CD4-positive, alpha-beta memory T cell (primary cell): ENCODE measurements at regions of chr12 and their contacts with region 1.

Region 1: GRCh38 chr12:47361389-47362021 is 281.7 kb upstream of the AMIGO2 start:
- DNase-seq: peak; percentile 23 to 64 (median 29)
- H3K4me3 ChIP-seq: peak overlapping the region; percentile 37 to 41
- H3K4me3 Mint-ChIP-seq: peak overlapping the region; percentile 73 to 93 (median 86)
- H3K27ac ChIP-seq: peak overlapping the region; percentile 90
- H3K27ac Mint-ChIP-seq: peak overlapping the region; percentile 94 to 99 (median 96)
- H3K4me1 ChIP-seq: peaks cover 81% of the 10 kb centered on the region
- H3K4me1 Mint-ChIP-seq: peaks cover 48 to 63% (median 55%) of the 10 kb centered on the region in 4 donors
- H3K27me3 ChIP-seq: no peaks in the 10 kb centered on the region
- H3K27me3 Mint-ChIP-seq: no peaks in the 10 kb centered on the region

Region 2: GRCh38 chr12:46224386-46224785 is 1137.1 kb before region 1 on chr12:
- CTCF ChIA-PET with region 1: no interaction called
- POLR2A ChIA-PET with region 1: no interaction called
- intact Hi-C with region 1: loop called (anchors 1 kb)
- DNase-seq: no peak
- H3K4me3 ChIP-seq: no peak overlapping the region
- H3K4me3 Mint-ChIP-seq: peak overlapping the region in 5 of 8 donors; percentile 13 to 53 (median 23)
- H3K27ac ChIP-seq: no peak overlapping the region
- H3K27ac Mint-ChIP-seq: peak overlapping the region; percentile 4 to 96 (median 86)
- H3K4me1 ChIP-seq: peaks cover 81% of the 10 kb centered on the region
- H3K4me1 Mint-ChIP-seq: peaks cover 60 to 90% (median 70%) of the 10 kb centered on the region in 4 donors
- H3K27me3 ChIP-seq: no peaks in the 10 kb centered on the region
- H3K27me3 Mint-ChIP-seq: no peaks in the 10 kb centered on the region

Region 3: DNA sequence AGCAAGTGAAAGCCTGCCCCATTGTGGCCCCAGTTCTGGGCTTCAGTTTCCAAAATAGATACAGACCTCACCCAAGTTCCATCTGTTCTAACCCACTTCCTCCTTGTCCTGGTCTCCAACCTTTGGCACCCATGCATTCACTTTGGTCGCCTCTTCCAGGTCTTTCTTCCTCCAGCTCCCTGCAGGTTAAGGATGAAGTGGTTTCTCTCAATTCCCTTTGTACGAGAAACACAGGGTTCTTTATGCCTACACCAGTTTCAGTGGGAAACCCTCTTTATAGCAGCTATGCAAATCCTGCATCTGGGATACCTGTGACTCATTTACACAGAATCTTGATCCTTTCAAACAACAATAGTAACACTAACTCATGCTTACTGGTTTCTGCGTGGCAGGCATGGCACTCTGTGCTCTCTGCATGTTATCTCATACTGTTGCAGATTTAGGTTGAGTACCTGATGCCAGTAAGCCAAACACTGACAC is 171.2 kb before region 1 on chr12:
- CTCF ChIA-PET with region 1: no interaction called
- POLR2A ChIA-PET with region 1: interaction called, 4 read pairs
- intact Hi-C with region 1: loop called (anchors 2 kb)
- DNase-seq: no peak
- H3K4me3 ChIP-seq: no peak overlapping the region
- H3K4me3 Mint-ChIP-seq: peak overlapping the region in 7 of 8 donors; percentile 8 to 93 (median 69)
- H3K27ac ChIP-seq: peak overlapping the region; percentile 42
- H3K27ac Mint-ChIP-seq: peak overlapping the region; percentile 62 to 95 (median 93)
- H3K4me1 ChIP-seq: peaks cover 80% of the 10 kb centered on the region
- H3K4me1 Mint-ChIP-seq: peaks cover 67 to 90% (median 78%) of the 10 kb centered on the region in 4 donors
- H3K27me3 ChIP-seq: no peaks in the 10 kb centered on the region
- H3K27me3 Mint-ChIP-seq: no peaks in the 10 kb centered on the region

Region 4: GRCh38 chr12:47207340-47207717 is 154.2 kb before region 1 on chr12:
- CTCF ChIA-PET with region 1: interaction called, 4 read pairs
- POLR2A ChIA-PET with region 1: interaction called, 16 read pairs
- intact Hi-C with region 1: no loop called
- DNase-seq: peak; percentile 38 to 76 (median 44)
- H3K4me3 ChIP-seq: peak overlapping the region; percentile 24 to 64
- H3K4me3 Mint-ChIP-seq: peak overlapping the region; percentile 68 to 97 (median 82)
- H3K27ac ChIP-seq: peak overlapping the region; percentile 60
- H3K27ac Mint-ChIP-seq: peak overlapping the region; percentile 87 to 96 (median 94)
- H3K4me1 ChIP-seq: peaks cover 77% of the 10 kb centered on the region
- H3K4me1 Mint-ChIP-seq: peaks cover 64 to 88% (median 76%) of the 10 kb centered on the region in 4 donors
- H3K27me3 ChIP-seq: no peaks in the 10 kb centered on the region
- H3K27me3 Mint-ChIP-seq: no peaks in the 10 kb centered on the region

Region 5: GRCh38 chr12:47226199-47226598 is 135.3 kb before region 1 on chr12:
- CTCF ChIA-PET with region 1: no interaction called
- POLR2A ChIA-PET with region 1: no interaction called
- intact Hi-C with region 1: no loop called
- DNase-seq: no peak
- H3K4me3 ChIP-seq: no peak overlapping the region
- H3K4me3 Mint-ChIP-seq: peak overlapping the region in 1 of 8 donors; percentile 55
- H3K27ac ChIP-seq: no peak overlapping the region
- H3K27ac Mint-ChIP-seq: peak overlapping the region in 5 of 7 donors; percentile 15 to 78 (median 66)
- H3K4me1 ChIP-seq: peaks cover 91% of the 10 kb centered on the region
- H3K4me1 Mint-ChIP-seq: peaks cover 49 to 82% (median 66%) of the 10 kb centered on the region in 4 donors
- H3K27me3 ChIP-seq: no peaks in the 10 kb centered on the region
- H3K27me3 Mint-ChIP-seq: no peaks in the 10 kb centered on the region

Region 6: DNA sequence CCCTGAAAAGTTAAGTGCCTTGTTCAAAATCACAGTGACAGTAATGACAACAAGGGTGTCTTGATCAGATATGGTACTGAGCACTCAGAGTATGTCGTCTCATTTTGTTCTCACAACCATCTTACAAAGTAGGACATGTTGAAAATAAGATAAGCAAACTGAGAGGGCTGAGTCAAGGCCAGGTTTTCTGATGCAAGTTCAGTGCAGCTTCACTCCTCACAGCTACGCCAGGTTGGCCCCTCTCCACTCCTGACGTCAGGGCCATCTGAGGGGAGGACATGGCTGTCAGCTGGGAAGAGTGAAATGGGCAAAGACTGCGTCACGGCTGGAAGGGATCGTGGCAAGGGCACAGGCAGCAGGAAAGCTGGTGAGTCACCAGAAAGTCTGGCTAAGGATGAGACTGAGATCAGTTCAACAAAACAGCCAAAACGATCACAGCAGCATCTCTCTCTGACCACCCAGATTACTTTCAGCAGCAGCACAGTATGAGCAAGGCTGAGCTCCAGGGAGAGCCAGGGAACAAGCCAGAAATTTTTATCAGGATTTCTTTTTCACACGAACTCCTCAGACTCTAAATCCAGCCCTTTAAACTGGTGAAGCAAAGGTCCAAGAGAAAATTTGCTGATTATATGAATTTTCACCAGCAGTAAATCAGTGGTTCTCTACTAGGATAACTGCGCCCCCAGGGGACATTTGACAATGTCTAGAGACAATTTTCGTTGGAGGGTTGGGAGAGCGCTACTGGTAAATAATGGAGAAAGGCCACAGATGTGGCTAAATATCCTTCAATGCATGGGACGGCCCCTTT is 16.1 kb after region 1 on chr12:
- CTCF ChIA-PET with region 1: no interaction called
- POLR2A ChIA-PET with region 1: interaction called, 4 read pairs
- intact Hi-C with region 1: loop called (anchors 2 kb)
- DNase-seq: no peak
- H3K4me3 ChIP-seq: no peak overlapping the region
- H3K4me3 Mint-ChIP-seq: no peak overlapping the region
- H3K27ac ChIP-seq: no peak overlapping the region
- H3K27ac Mint-ChIP-seq: peak overlapping the region in 3 of 7 donors; percentile 19 to 66 (median 29)
- H3K4me1 ChIP-seq: peaks cover 17% of the 10 kb centered on the region
- H3K4me1 Mint-ChIP-seq: peaks cover 15 to 47% (median 20%) of the 10 kb centered on the region in 4 donors
- H3K27me3 ChIP-seq: no peaks in the 10 kb centered on the region
- H3K27me3 Mint-ChIP-seq: no peaks in the 10 kb centered on the region

Region 7: DNA sequence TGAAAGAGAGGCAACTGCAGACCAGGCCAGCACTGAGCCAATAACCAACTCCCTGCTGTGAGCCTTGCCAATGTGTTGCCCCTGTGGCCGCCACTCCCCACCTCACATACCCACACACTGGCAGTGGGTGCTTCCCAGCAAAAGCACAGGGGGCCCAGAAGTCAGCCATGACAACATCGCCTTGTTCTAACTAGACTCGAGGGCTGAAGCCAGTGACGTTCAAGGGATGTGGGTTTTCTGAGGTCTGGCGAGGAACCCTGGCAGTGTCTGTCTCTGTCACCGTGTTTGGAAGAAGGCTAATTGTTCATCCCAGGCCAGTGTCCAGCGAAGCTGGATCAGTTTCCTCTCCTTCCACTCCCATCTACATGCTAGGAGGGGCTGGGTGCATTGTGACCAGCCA is 30.1 kb after region 1 on chr12:
- CTCF ChIA-PET with region 1: interaction called, 54 read pairs
- POLR2A ChIA-PET with region 1: interaction called, 15 read pairs
- intact Hi-C with region 1: no loop called
- DNase-seq: peak; percentile 66 to 86 (median 72)
- H3K4me3 ChIP-seq: no peak overlapping the region
- H3K4me3 Mint-ChIP-seq: peak overlapping the region; percentile 29 to 83 (median 63)
- H3K27ac ChIP-seq: peak overlapping the region; percentile 54
- H3K27ac Mint-ChIP-seq: peak overlapping the region; percentile 95 to 99 (median 98)
- H3K4me1 ChIP-seq: peaks cover 60% of the 10 kb centered on the region
- H3K4me1 Mint-ChIP-seq: peaks cover 45 to 74% (median 60%) of the 10 kb centered on the region in 4 donors
- H3K27me3 ChIP-seq: no peaks in the 10 kb centered on the region
- H3K27me3 Mint-ChIP-seq: no peaks in the 10 kb centered on the region

Region 8: GRCh38 chr12:47493801-47494200 is 132.3 kb after region 1 on chr12:
- CTCF ChIA-PET with region 1: no interaction called
- POLR2A ChIA-PET with region 1: no interaction called
- intact Hi-C with region 1: no loop called
- DNase-seq: no peak
- H3K4me3 ChIP-seq: no peak overlapping the region
- H3K4me3 Mint-ChIP-seq: no peak overlapping the region
- H3K27ac ChIP-seq: no peak overlapping the region
- H3K27ac Mint-ChIP-seq: no peak overlapping the region
- H3K4me1 ChIP-seq: no peaks in the 10 kb centered on the region
- H3K4me1 Mint-ChIP-seq: peaks cover 0 to under 1% (median 0%) of the 10 kb centered on the region in 4 donors
- H3K27me3 ChIP-seq: no peaks in the 10 kb centered on the region
- H3K27me3 Mint-ChIP-seq: peaks cover 7 to 20% of the 10 kb centered on the region in 2 donors

Region 9: DNA sequence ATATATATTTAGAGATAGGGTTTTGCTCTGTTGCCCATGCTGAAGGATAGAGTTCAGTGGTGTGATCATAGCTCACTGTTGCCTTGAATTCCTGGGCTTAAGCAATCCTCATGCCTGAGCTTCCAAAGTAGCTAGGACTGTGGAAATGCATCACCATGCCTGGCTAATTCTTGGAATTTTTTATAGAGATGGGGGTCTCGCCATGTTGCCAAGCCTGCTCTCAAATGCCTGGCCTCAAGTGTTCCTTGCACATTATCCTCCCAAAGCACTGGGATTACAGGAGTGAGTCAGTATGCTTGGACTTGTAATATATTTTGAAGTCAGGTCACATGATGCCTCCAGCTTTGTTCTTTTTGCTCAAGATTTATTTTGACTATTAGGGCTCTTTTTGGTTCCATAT is 166.3 kb after region 1 on chr12:
- CTCF ChIA-PET with region 1: no interaction called
- POLR2A ChIA-PET with region 1: no interaction called
- intact Hi-C with region 1: no loop called
- DNase-seq: no peak
- H3K4me3 ChIP-seq: no peak overlapping the region
- H3K4me3 Mint-ChIP-seq: no peak overlapping the region
- H3K27ac ChIP-seq: no peak overlapping the region
- H3K27ac Mint-ChIP-seq: no peak overlapping the region
- H3K4me1 ChIP-seq: no peaks in the 10 kb centered on the region
- H3K4me1 Mint-ChIP-seq: no peaks in the 10 kb centered on the region
- H3K27me3 ChIP-seq: peaks cover 4% of the 10 kb centered on the region
- H3K27me3 Mint-ChIP-seq: peaks cover 4 to 10% of the 10 kb centered on the region in 2 donors